MCF 10A (cell line): ENCODE measurements at regions of chr15 and their contacts with region 1.

Region 1: DNA sequence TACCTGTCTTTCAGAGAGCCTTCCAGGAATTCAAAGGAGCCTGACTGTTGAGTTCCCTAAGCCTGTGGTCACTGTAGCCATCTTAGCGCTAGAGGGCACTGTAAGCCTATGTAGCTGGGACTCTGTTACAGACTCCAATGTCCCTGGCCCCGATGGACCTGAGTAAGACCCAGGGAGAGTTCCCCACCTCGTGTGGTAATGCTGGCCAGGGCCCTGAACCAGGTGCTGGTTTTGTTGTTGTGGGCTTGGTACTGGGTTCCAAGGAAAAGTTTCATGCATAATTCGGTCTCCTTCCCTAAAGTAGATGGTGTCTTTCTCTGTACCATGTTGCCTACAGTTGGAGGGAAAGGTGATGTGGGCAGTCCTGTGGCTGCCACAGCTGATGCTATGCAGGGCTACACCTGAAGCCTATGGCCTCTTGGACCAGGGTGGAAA is 32.4 kb downstream of the CDAN1 start:
- DNase-seq: peak; percentile 83
- H3K4me3 Mint-ChIP-seq: no peak overlapping the region
- H3K27ac Mint-ChIP-seq: no peak overlapping the region
- H3K4me1 Mint-ChIP-seq: peaks cover 6% of the 10 kb centered on the region
- H3K27me3 Mint-ChIP-seq: no peaks in the 10 kb centered on the region
- CTCF ChIP-seq: peak; percentile 88

Region 2: GRCh38 chr15:42591238-42591934 is 113.1 kb before region 1 on chr15:
- CTCF ChIA-PET with region 1: no interaction called
- POLR2A ChIA-PET with region 1: no interaction called
- intact Hi-C with region 1: no loop called
- DNase-seq: peak; percentile 28
- H3K4me3 Mint-ChIP-seq: no peak overlapping the region
- H3K27ac Mint-ChIP-seq: no peak overlapping the region
- H3K4me1 Mint-ChIP-seq: no peaks in the 10 kb centered on the region
- H3K27me3 Mint-ChIP-seq: no peaks in the 10 kb centered on the region
- CTCF ChIP-seq: peak; percentile 22

Region 3: GRCh38 chr15:42716626-42717025 is 12.1 kb after region 1 on chr15:
- CTCF ChIA-PET with region 1: interaction called, 10 read pairs
- POLR2A ChIA-PET with region 1: interaction called, 3 read pairs
- intact Hi-C with region 1: no loop called
- DNase-seq: no peak
- H3K4me3 Mint-ChIP-seq: no peak overlapping the region
- H3K27ac Mint-ChIP-seq: no peak overlapping the region
- H3K4me1 Mint-ChIP-seq: no peaks in the 10 kb centered on the region
- H3K27me3 Mint-ChIP-seq: no peaks in the 10 kb centered on the region
- CTCF ChIP-seq: no peak

Region 4: GRCh38 chr15:42723054-42723453 is 18.5 kb after region 1 on chr15:
- CTCF ChIA-PET with region 1: interaction called, 10 read pairs
- POLR2A ChIA-PET with region 1: interaction called, 3 read pairs
- intact Hi-C with region 1: loop called (anchors 1 kb)
- DNase-seq: peak; percentile 18
- H3K4me3 Mint-ChIP-seq: no peak overlapping the region
- H3K27ac Mint-ChIP-seq: no peak overlapping the region
- H3K4me1 Mint-ChIP-seq: no peaks in the 10 kb centered on the region
- H3K27me3 Mint-ChIP-seq: no peaks in the 10 kb centered on the region
- CTCF ChIP-seq: no peak

Region 5: GRCh38 chr15:42800731-42801474 is 96.4 kb after region 1 on chr15:
- CTCF ChIA-PET with region 1: no interaction called
- POLR2A ChIA-PET with region 1: no interaction called
- intact Hi-C with region 1: no loop called
- DNase-seq: no peak
- H3K4me3 Mint-ChIP-seq: no peak overlapping the region
- H3K27ac Mint-ChIP-seq: no peak overlapping the region
- H3K4me1 Mint-ChIP-seq: peaks cover 4% of the 10 kb centered on the region
- H3K27me3 Mint-ChIP-seq: no peaks in the 10 kb centered on the region
- CTCF ChIP-seq: no peak

Region 6: DNA sequence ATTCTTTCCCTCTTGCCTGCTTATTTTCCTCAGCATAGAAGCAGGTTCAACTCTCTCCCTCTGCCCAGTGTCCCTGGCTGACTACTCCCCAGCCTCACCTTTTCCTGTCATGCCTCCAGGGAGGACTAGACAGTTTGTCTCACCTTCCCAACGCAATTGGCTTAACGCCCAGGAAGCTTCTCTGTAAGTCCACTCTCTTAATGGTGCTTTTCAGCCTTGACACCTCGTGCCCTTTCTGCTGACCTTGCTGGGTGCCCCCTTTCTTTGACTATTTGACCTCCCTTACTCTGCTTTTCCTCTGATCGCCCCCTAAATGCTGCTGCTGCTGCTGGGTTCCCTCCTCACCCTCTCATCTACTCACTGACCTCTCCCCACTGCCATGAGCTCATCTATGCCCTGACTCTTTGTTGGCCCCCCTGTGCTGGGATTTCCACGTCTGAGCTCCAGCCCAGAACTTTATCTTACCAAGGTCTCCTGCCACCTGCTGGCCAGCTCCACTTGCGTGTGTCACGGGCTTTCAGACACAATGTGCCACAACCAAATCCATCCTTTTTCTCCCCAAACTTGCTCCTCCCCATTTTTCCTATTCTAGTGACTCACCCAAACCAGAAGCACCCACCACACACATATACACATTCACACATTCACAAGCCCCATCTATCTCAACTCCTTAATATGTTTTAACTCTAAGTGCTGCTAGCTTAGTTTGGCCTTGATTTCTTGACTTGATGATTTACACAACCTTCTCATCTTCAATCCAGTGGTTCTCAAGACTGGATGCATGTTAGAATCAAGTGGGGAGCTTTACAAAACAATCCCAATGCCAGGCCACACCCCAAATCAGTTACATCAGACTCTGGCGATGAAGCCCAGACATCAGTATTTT is 499.8 kb after region 1 on chr15:
- CTCF ChIA-PET with region 1: interaction called, 4 read pairs
- POLR2A ChIA-PET with region 1: interaction called, 3 read pairs
- intact Hi-C with region 1: loop called (anchors 1 kb)
- DNase-seq: peak; percentile 69
- H3K4me3 Mint-ChIP-seq: no peak overlapping the region
- H3K27ac Mint-ChIP-seq: peak overlapping the region; percentile 17
- H3K4me1 Mint-ChIP-seq: peaks cover 11% of the 10 kb centered on the region
- H3K27me3 Mint-ChIP-seq: no peaks in the 10 kb centered on the region
- CTCF ChIP-seq: peak; percentile 39